K562 (cell line): ENCODE measurements at regions of chr9 and their contacts with region 1.

Region 1: DNA sequence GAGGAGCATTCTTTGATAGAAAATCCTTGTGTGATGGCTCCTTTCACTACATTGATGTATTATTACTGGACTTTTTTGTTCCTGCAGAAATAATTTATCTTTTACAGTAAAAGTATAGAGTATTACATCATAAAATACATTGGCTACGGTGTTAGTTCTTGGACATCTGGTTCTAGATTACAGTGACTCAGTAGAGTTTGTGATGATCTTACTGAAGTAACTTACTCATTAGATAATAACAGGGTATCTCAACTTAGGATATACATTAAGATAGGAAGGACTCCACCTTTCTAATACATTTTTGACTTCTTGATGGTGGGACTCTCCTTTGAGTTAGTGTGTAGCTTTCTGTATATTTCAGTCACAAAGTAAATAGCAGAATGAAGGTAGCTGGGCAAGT is 59.1 kb downstream of the ZNF462 start:
- DNase-seq: no peak
- ATAC-seq: no peak
- H3K4me3 ChIP-seq: no peak overlapping the region
- H3K27ac ChIP-seq: no peak overlapping the region
- H3K4me1 ChIP-seq: no peaks in the 10 kb centered on the region
- H3K27me3 ChIP-seq: no peaks in the 10 kb centered on the region
- CTCF ChIP-seq: no peak
- EP300 ChIP-seq: no peak
- POLR2A ChIP-seq: no peak
- RAD21 ChIP-seq: no peak

Region 2: DNA sequence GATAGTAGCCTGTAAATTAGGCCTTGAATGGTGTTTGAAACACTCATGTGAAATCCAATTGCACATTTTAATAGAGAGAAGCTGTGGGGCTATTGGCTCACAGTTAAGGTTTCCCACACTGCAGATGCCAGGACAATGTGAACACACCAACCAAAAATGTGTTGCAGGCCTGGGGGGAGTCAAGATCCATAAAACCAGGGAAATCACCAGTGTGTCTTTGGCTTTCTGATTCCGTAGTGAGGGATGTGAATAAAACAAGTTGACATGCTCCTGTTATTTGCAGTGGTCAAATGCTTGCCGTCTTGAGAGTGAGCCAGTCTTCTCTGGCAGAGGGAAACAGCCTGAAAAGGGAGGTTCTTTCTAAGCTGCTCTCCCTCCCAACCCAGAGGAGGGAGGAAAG is 19.9 kb after region 1 on chr9:
- CTCF ChIA-PET with region 1: no interaction called
- POLR2A ChIA-PET with region 1: no interaction called
- in situ Hi-C with region 1: no loop called
- intact Hi-C with region 1: loop called (anchors 2 kb)
- DNase-seq: no peak
- ATAC-seq: no peak
- H3K4me3 ChIP-seq: no peak overlapping the region
- H3K27ac ChIP-seq: no peak overlapping the region
- H3K4me1 ChIP-seq: no peaks in the 10 kb centered on the region
- H3K27me3 ChIP-seq: no peaks in the 10 kb centered on the region
- CTCF ChIP-seq: no peak
- EP300 ChIP-seq: no peak
- POLR2A ChIP-seq: no peak
- RAD21 ChIP-seq: no peak

Region 3: GRCh38 chr9:107049046-107049802 is 127.2 kb after region 1 on chr9:
- CTCF ChIA-PET with region 1: no interaction called
- POLR2A ChIA-PET with region 1: no interaction called
- in situ Hi-C with region 1: no loop called
- intact Hi-C with region 1: no loop called
- DNase-seq: no peak
- ATAC-seq: no peak
- H3K4me3 ChIP-seq: no peak overlapping the region
- H3K27ac ChIP-seq: no peak overlapping the region
- H3K4me1 ChIP-seq: no peaks in the 10 kb centered on the region
- H3K27me3 ChIP-seq: no peaks in the 10 kb centered on the region
- CTCF ChIP-seq: no peak
- EP300 ChIP-seq: no peak
- POLR2A ChIP-seq: no peak
- RAD21 ChIP-seq: no peak